Motor neuron (in vitro differentiated cells): ENCODE measurements at regions of chr10 and their contacts with region 1.

Region 1: GRCh38 chr10:97210543-97210961 is 24.8 kb upstream of the SLIT1 start:
- ATAC-seq: peak in 7 of 8 experiments; percentile 51 to 89 (median 73)
- H3K4me3 ChIP-seq: no peak overlapping the region
- H3K27ac ChIP-seq: no peak overlapping the region
- H3K4me1 ChIP-seq: peaks cover 0 to 2% of the 10 kb centered on the region in 2 donors

Region 2: GRCh38 chr10:96374985-96375830 is 835.3 kb before region 1 on chr10:
- in situ Hi-C with region 1: loop called in 1 of 9 experiments (anchors 25 kb)
- ATAC-seq: peak; percentile 65 to 97 (median 93)
- H3K4me3 ChIP-seq: peak overlapping the region in 4 of 5 donors; percentile 4 to 14 (median 12)
- H3K27ac ChIP-seq: no peak overlapping the region
- H3K4me1 ChIP-seq: peaks cover 4% of the 10 kb centered on the region in 2 donors

Region 3: DNA sequence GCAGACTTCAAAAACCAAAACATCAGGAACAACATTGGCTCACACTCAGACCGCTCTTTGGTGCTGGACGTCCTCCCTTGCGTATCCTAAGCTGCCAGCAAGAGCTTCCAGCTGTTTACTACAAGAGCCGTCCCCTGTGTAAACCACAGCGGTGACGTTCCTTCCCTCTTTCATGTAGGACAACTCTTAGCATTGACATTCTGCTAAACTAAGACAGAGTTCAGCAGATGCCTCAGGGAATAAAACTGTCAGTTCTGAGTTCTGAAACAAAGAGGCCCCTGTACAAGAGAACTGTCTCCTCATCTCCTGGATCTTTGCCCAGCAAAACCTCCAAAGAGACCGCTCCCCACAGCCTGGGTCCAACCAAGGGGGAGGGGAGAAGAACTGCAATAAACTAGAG is 793.9 kb before region 1 on chr10:
- in situ Hi-C with region 1: loop called in 1 of 9 experiments (anchors 25 kb)
- ATAC-seq: peak in 4 of 8 experiments; percentile 11 to 60 (median 24)
- H3K4me3 ChIP-seq: no peak overlapping the region
- H3K27ac ChIP-seq: no peak overlapping the region
- H3K4me1 ChIP-seq: peaks cover 5 to 16% of the 10 kb centered on the region in 2 donors

Region 4: GRCh38 chr10:97072851-97073665 is 137.5 kb before region 1 on chr10:
- in situ Hi-C with region 1: loop called in 6 of 9 experiments (anchors 10 to 25 kb)
- ATAC-seq: peak; percentile 77 to 96 (median 87)
- H3K4me3 ChIP-seq: no peak overlapping the region
- H3K27ac ChIP-seq: no peak overlapping the region
- H3K4me1 ChIP-seq: peaks cover 26 to 35% of the 10 kb centered on the region in 2 donors